ENCODE measurements at regions of chr1 and their contacts with region 1.

Region 1: DNA sequence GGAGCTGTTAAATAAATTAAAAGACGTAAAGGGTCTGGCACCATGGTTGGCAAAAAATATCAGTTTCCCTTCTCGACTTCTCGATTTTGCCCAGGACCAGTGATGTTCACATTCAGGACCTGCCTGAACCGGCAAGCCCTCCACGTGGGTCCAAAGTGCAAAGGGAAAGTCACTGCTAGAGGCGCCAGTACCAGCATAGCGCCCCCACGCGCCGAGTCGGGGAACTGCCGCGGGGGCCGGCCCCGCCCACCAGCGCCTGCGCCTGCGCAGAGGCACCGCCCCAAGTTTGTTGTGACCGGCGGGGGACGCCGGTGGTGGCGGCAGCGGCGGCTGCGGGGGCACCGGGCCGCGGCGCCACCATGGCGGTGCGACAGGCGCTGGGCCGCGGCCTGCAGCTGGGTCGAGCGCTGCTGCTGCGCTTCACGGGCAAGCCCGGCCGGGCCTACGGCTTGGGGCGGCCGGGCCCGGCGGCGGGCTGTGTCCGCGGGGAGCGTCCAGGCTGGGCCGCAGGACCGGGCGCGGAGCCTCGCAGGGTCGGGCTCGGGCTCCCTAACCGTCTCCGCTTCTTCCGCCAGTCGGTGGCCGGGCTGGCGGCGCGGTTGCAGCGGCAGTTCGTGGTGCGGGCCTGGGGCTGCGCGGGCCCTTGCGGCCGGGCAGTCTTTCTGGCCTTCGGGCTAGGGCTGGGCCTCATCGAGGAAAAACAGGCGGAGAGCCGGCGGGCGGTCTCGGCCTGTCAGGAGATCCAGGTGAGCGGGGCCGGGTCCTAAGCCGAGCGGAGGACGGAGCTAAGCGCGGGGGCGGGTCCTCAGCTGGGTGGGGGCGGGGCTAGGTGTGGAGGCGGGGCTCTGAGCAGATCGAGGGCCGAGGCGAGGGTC is at the start of gene PINK1:
- DNase-seq: peak; percentile 95
- H3K4me3 ChIP-seq: peak within 1 kb of the TSS; percentile 64 to 88
- H3K27ac ChIP-seq: peak within 1 kb of the TSS; percentile 60 to 70
- H3K4me1 ChIP-seq: peaks cover 0 to 12% of the 10 kb centered on the region in 2 experiments; a peak in 1 of 4 replicates
- H3K27me3 ChIP-seq: no peaks in the 10 kb centered on the region
- CTCF ChIP-seq: peak; percentile 96
- EP300 ChIP-seq: no peak
- RAD21 ChIP-seq: peak; percentile 66
- polyA plus RNA-seq, gene PINK1: 24.4 and 24.9 TPM in 2 replicates

Region 2: GRCh38 chr1:20530906-20531305 is 102.5 kb before region 1 on chr1:
- CTCF ChIA-PET with region 1: interaction called, 27 read pairs
- POLR2A ChIA-PET with region 1: no interaction called
- DNase-seq: no peak
- H3K4me3 ChIP-seq: no peak overlapping the region
- H3K27ac ChIP-seq: no peak overlapping the region
- H3K4me1 ChIP-seq: no peaks in the 10 kb centered on the region; a peak in 1 of 4 replicates
- H3K27me3 ChIP-seq: peaks cover 45% of the 10 kb centered on the region
- CTCF ChIP-seq: no peak
- EP300 ChIP-seq: no peak
- RAD21 ChIP-seq: no peak

Region 3: DNA sequence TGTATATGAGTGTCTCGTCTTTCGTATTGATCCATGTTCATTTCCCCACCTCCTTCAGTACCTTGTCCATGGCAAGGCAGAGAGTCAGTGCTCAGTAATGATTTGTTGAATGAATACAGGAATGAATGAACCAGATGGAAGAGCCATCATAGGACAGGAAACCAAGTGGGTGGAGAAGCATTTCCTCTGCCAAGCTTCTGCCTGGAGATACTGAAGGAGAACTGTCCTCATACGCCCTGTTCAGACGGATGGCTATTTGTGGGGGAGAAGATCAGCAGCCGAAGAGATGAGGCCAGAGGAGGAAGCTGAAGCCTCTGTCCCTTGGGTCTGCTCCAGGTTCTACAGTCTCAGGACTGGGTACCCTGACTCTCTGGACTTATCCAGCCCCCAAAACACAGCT is 75.2 kb before region 1 on chr1:
- CTCF ChIA-PET with region 1: interaction called, 11 read pairs
- POLR2A ChIA-PET with region 1: no interaction called
- DNase-seq: no peak
- H3K4me3 ChIP-seq: no peak overlapping the region
- H3K27ac ChIP-seq: no peak overlapping the region
- H3K4me1 ChIP-seq: peaks cover 0 to 9% of the 10 kb centered on the region in 2 experiments; a peak in 1 of 4 replicates
- H3K27me3 ChIP-seq: peaks cover 30% of the 10 kb centered on the region; the same call in 1 of the 2 replicates
- CTCF ChIP-seq: no peak
- EP300 ChIP-seq: no peak
- RAD21 ChIP-seq: no peak

Region 4: GRCh38 chr1:20611652-20612051 is 21.8 kb before region 1 on chr1:
- CTCF ChIA-PET with region 1: interaction called, 12 read pairs
- POLR2A ChIA-PET with region 1: no interaction called
- DNase-seq: no peak
- H3K4me3 ChIP-seq: no peak overlapping the region
- H3K27ac ChIP-seq: no peak overlapping the region
- H3K4me1 ChIP-seq: peaks cover 6 to 10% of the 10 kb centered on the region in 2 experiments; a peak in 1 of 4 replicates
- H3K27me3 ChIP-seq: no peaks in the 10 kb centered on the region
- CTCF ChIP-seq: no peak
- EP300 ChIP-seq: no peak
- RAD21 ChIP-seq: no peak

Region 5: GRCh38 chr1:20648946-20649345 is 15.5 kb after region 1 on chr1:
- CTCF ChIA-PET with region 1: interaction called, 21 read pairs
- POLR2A ChIA-PET with region 1: no interaction called
- DNase-seq: no peak
- H3K4me3 ChIP-seq: no peak overlapping the region
- H3K27ac ChIP-seq: no peak overlapping the region
- H3K4me1 ChIP-seq: no peaks in the 10 kb centered on the region
- H3K27me3 ChIP-seq: no peaks in the 10 kb centered on the region
- CTCF ChIP-seq: no peak
- EP300 ChIP-seq: no peak
- RAD21 ChIP-seq: no peak